Ascending aorta (tissue), 2 donors: ENCODE measurements at regions of chr21 and their contacts with region 1.

Region 1: DNA sequence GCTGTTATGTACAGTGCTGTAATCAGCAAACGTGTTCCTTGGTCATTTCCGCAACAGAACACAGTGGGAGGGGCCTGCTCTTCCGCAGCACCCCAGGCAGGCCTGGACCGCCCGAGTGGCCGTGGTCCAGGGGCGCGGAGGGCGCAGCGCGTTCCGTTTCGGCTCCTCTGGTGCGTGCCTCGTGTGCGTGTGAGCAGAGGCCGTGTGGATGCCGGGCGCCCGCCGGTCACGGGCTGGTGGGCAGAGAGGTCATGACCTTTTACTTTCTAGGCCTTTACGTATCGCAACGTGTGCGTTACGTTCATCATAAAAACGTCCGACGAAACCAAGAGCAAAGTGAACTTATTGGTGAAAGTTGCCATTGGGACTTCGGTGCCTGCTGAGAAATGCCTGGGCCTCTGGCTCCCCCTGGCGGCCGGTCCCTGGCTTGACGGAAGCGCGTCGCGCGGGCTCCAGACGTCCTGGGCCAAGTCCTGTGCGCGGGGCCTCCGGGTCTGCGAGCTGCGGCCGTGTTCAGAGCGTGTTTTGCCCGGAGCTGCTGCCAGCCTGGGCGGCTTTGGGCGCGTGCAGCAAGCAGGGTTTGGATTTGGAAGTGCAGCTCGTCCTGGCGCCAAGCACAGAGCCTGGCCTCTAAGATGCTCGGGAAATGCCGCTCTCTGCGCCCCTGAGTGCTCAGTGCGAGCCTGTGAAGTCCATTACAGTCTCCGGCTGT is 34.4 kb downstream of the COL18A1 start:
- DNase-seq: peak in 1 of 2 donors; percentile 90
- H3K4me3 ChIP-seq: peak overlapping the region; percentile 34 to 49
- H3K27ac ChIP-seq: peak overlapping the region; percentile 77 to 87
- H3K4me1 ChIP-seq: peaks cover 6 to 21% of the 10 kb centered on the region in 2 donors
- H3K27me3 ChIP-seq: no peaks in the 10 kb centered on the region
- CTCF ChIP-seq: peak; percentile 92 to 99 (median 97)

Region 2: GRCh38 chr21:45140346-45140940 is 298.9 kb before region 1 on chr21:
- intact Hi-C with region 1: loop called (anchors 5 kb)
- DNase-seq: peak in 1 of 2 donors; percentile 85
- H3K4me3 ChIP-seq: no peak overlapping the region
- H3K27ac ChIP-seq: no peak overlapping the region
- H3K4me1 ChIP-seq: peaks cover 0 to 20% of the 10 kb centered on the region in 2 donors
- H3K27me3 ChIP-seq: no peaks in the 10 kb centered on the region
- CTCF ChIP-seq: peak; percentile 57 to 73 (median 71)

Region 3: GRCh38 chr21:45167796-45168222 is 271.5 kb before region 1 on chr21:
- intact Hi-C with region 1: loop called (anchors 10 kb)
- DNase-seq: no peak
- H3K4me3 ChIP-seq: no peak overlapping the region
- H3K27ac ChIP-seq: peak overlapping the region; percentile 42 to 44
- H3K4me1 ChIP-seq: peaks cover 5 to 38% of the 10 kb centered on the region in 2 donors
- H3K27me3 ChIP-seq: no peaks in the 10 kb centered on the region
- CTCF ChIP-seq: no peak

Region 4: DNA sequence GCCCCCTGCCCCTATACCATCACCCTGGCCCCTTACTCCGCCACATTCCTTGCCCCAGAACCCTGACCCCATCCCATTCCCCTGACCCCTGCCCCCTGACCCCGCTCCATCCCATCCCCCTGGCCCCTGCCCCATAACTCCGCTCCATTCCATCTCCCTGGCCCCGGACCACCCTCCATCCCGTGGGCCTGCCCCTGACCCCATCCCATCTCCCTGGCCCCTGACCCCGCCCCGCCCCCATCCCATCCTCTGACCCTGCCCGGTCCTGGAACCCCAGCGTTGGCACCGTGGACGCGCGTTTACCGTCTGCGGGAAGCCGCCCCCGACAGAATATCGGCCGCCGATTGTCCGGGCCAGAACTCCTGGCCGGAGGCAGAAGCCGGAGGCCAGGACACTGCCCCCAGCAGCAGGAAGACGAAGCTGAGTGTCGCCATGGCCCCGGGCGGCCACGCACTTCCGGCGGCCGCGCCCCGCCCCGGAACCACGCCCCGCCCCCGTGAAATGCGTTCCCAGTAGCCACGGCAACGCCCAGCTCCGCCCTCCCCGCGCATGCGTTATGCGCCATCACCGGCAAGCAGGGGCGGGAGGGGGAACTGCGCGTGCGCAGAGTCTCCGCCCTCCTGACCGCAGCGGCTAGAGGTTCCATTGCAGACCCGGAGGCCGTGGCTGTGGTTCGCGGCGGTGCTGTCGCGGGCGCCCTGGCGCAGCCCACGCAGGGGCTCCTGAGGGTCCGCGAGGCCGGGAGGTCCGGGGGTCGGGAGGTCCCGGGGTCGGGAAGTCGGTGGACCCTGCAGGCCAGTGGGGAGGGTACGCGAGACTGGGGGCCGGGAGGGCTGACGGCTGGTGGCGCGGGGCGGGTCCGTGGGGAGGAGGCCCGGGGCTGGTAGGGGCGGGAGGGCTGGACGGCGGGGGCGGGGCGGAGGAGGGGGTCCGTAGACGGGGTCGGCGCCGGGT is 151.6 kb before region 1 on chr21 and contains the start of gene POFUT2:
- intact Hi-C with region 1: loop called (anchors 1 kb)
- DNase-seq: peak; percentile 83 to 98
- H3K4me3 ChIP-seq: peak within 1 kb of the TSS; percentile 61 to 98
- H3K27ac ChIP-seq: peak within 1 kb of the TSS; percentile 83 to 88
- H3K4me1 ChIP-seq: peaks cover 11 to 20% of the 10 kb centered on the region in 2 donors
- H3K27me3 ChIP-seq: no peaks in the 10 kb centered on the region
- CTCF ChIP-seq: peak in 1 of 3 experiments; percentile 5
- total RNA-seq, gene POFUT2: 39.4 TPM

Region 5: DNA sequence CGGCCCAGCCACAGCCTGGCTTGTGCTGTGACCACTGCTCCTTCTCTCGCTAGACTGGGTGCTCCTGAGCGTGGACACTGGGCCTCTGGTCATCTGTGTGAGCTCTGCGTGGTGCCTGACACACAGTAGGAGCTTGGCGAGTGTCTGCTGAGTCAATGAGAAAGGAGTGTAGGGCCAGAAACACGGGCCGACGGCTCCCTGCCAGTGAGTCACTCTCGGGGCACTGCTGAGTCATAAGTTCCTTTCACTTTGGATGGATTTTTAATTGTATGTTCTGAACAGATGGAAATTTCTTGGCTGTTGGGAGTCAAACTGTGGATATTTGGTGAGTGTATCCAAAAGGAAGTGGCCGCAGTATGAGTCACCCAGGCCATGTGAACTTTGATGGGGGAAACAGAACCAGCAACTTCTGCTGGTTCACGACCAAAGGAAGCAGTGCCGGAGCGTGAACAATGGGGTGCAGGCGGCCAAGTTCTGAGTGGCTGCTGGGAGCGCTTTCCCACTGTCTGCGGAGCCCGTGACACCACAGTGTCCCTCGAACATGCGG is 75.3 kb before region 1 on chr21:
- intact Hi-C with region 1: loop called (anchors 1 kb)
- DNase-seq: peak; percentile 83 to 96
- H3K4me3 ChIP-seq: peak overlapping the region in 1 of 2 donors; percentile 36
- H3K27ac ChIP-seq: peak overlapping the region; percentile 98 to 99
- H3K4me1 ChIP-seq: peaks cover 21 to 44% of the 10 kb centered on the region in 2 donors
- H3K27me3 ChIP-seq: no peaks in the 10 kb centered on the region
- CTCF ChIP-seq: no peak

Region 6: GRCh38 chr21:45386721-45387371 is 52.5 kb before region 1 on chr21:
- intact Hi-C with region 1: loop called (anchors 5 kb)
- DNase-seq: peak in 1 of 2 donors; percentile 81
- H3K4me3 ChIP-seq: no peak overlapping the region
- H3K27ac ChIP-seq: peak overlapping the region in 1 of 2 donors; percentile 19
- H3K4me1 ChIP-seq: peaks cover 0 to 12% of the 10 kb centered on the region in 2 donors
- H3K27me3 ChIP-seq: no peaks in the 10 kb centered on the region
- CTCF ChIP-seq: peak in 2 of 3 experiments; percentile 23 to 42

Region 7: DNA sequence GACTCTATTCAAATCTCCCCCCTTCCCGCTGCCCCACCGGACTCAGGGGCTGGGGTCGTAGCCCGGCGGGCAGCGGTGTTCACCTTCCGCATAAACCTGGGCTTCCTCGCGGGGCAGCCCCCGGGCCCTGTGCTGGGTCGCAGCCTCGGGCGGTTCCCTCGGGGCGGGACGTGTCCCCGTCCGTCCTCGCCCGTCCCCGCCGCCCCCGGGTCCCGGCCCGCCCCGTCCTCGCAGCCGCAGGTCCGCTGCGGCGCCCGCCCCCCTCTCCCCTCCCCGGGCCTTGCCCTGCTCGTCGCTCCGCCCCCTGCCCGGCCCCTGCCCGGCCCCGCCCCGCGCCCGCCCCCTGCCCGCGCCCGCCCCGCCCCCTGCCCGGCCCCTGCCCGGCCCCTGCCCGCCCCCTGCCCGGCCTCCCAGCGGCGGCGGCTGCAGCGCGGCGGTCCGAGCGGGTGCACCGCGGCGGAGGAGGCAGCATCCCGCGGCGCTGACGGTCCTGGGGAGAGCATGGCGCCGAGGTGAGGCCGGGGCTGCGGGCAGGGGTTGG is 34.5 kb before region 1 on chr21 and contains the start of gene COL18A1:
- intact Hi-C with region 1: loop called (anchors 2 kb)
- DNase-seq: peak in 1 of 2 donors; percentile 83
- H3K4me3 ChIP-seq: peak within 1 kb of the TSS; percentile 85 to 91
- H3K27ac ChIP-seq: peak within 1 kb of the TSS; percentile 92 to 93
- H3K4me1 ChIP-seq: peaks cover 15 to 29% of the 10 kb centered on the region in 2 donors
- H3K27me3 ChIP-seq: no peaks in the 10 kb centered on the region
- CTCF ChIP-seq: no peak
- total RNA-seq, gene COL18A1: 699 TPM

Region 8: GRCh38 chr21:45460611-45461368 is 21.5 kb after region 1 on chr21:
- intact Hi-C with region 1: no loop called
- DNase-seq: no peak
- H3K4me3 ChIP-seq: no peak overlapping the region
- H3K27ac ChIP-seq: peak overlapping the region; percentile 34
- H3K4me1 ChIP-seq: peaks cover 5 to 33% of the 10 kb centered on the region in 2 donors
- H3K27me3 ChIP-seq: no peaks in the 10 kb centered on the region
- CTCF ChIP-seq: no peak